HCT116 (cell line): ENCODE measurements at regions of chr18 and their contacts with region 1.

Region 1: DNA sequence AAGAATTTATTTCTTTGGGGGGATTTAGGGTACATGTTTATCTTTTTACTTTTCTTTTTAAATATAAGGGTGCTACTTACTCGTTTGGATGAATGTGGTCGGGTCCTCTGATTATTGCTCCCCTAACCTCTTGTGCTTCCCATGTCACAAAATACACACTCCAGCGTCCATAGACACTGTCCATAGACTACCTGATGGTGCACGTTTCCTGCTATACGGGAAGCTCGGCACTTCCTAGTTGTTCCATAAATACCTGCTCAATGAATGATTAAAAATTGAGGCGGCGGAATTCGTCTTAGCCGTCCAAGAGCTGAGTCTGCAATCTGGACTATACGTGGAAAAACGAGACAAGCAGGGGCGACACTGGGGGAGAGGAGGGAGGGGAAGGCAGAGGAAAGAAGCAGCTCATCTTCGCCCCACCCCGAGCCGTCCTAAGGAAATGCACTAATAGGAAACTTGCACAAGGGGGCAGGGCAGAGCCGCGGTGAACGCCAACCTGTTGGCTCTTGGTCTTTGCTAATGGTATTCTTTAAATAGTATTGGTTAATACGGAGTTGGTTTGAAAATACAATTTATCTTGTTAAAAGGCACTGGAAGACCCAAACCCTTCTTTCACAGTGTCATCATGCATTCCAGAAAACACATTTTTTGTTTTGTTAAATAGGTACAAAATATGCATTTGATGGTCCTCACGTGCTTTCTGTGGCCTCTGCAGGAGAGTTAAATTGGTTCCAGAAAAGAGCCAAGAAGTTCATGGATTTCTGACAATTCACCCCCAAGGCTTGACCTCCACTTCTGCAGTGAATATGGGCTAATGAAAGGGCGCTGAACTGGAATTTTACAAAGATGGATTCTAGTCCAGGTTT is 73.0 kb upstream of the KCTD1 start:
- DNase-seq: peak; percentile 23
- ATAC-seq: peak; percentile 95
- H3K4me3 ChIP-seq: peak overlapping the region; percentile 41 to 58
- H3K27ac ChIP-seq: no peak overlapping the region
- H3K4me1 ChIP-seq: peaks cover 7 to 27% of the 10 kb centered on the region in 2 experiments; a peak in 3 of 4 replicates
- H3K27me3 ChIP-seq: no peaks in the 10 kb centered on the region
- CTCF ChIP-seq: peak; percentile 56 to 80 (median 75)
- POLR2A ChIP-seq: no peak
- RAD21 ChIP-seq: peak; percentile 77

Region 2: GRCh38 chr18:26405190-26405801 is 216.1 kb before region 1 on chr18:
- CTCF ChIA-PET with region 1: interaction called, 15 read pairs
- POLR2A ChIA-PET with region 1: no interaction called
- RAD21 ChIA-PET with region 1: interaction called in 1 of 2 experiments, 3 read pairs
- intact Hi-C with region 1: no loop called
- DNase-seq: peak; percentile 36
- ATAC-seq: peak; percentile 96
- H3K4me3 ChIP-seq: no peak overlapping the region
- H3K27ac ChIP-seq: no peak overlapping the region
- H3K4me1 ChIP-seq: no peaks in the 10 kb centered on the region; a peak in 1 of 4 replicates
- H3K27me3 ChIP-seq: no peaks in the 10 kb centered on the region
- CTCF ChIP-seq: peak; percentile 56 to 75 (median 64); a peak in 5 of 6 replicates
- POLR2A ChIP-seq: no peak
- RAD21 ChIP-seq: peak; percentile 90

Region 3: GRCh38 chr18:26648509-26649192 is 27.3 kb after region 1 on chr18:
- CTCF ChIA-PET with region 1: interaction called, 11 read pairs
- POLR2A ChIA-PET with region 1: no interaction called
- RAD21 ChIA-PET with region 1: no interaction called
- intact Hi-C with region 1: no loop called
- DNase-seq: no peak
- ATAC-seq: no peak
- H3K4me3 ChIP-seq: no peak overlapping the region
- H3K27ac ChIP-seq: no peak overlapping the region
- H3K4me1 ChIP-seq: peaks cover 0 to 3% of the 10 kb centered on the region in 2 experiments; a peak in 1 of 4 replicates
- H3K27me3 ChIP-seq: peaks cover 10% of the 10 kb centered on the region
- CTCF ChIP-seq: no peak
- POLR2A ChIP-seq: no peak
- RAD21 ChIP-seq: no peak

Region 4: DNA sequence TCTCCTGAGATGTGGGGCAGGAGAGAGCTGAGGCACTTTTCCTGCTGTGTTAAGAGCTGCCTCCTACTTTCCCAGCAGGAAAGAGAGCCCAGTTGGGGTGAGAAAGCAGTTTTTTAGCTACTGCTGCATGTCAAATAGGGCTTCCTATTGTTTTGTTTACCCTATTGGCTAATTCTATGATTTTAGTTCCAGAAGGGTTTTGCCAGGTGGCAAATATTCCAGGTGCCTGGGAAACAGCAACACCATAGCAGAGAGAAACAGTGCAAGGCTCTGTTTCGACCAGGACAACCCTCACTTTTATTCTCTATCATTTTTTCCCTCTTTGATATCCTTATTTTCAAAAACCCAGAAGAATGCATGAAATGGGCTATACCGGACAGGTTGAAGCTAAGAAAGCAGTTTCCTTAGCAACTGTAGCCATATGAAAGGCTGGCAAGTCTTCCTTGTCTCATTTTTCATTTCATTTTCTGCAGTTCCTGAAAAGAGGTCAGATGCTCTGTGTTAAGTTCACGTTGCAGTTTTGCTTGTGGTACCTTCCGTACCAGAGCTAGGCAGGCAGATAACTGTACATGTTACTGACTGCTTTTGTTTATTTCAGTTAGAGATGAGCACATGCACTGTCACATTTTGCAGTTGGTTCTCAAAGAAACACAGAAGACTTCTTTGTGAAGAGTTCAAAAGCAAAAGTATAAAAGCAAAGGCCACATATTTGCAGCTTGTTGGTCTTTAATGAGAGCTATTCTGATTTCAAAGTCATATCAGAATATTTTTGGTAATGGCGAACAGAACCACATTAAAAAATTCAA is 159.3 kb after region 1 on chr18:
- CTCF ChIA-PET with region 1: no interaction called
- POLR2A ChIA-PET with region 1: no interaction called
- RAD21 ChIA-PET with region 1: no interaction called
- intact Hi-C with region 1: loop called (anchors 10 kb)
- DNase-seq: no peak
- ATAC-seq: no peak
- H3K4me3 ChIP-seq: no peak overlapping the region
- H3K27ac ChIP-seq: no peak overlapping the region
- H3K4me1 ChIP-seq: no peaks in the 10 kb centered on the region
- H3K27me3 ChIP-seq: peaks cover 31% of the 10 kb centered on the region
- CTCF ChIP-seq: no peak
- POLR2A ChIP-seq: no peak
- RAD21 ChIP-seq: no peak

Region 5: GRCh38 chr18:26826656-26827235 is 205.4 kb after region 1 on chr18:
- CTCF ChIA-PET with region 1: no interaction called
- POLR2A ChIA-PET with region 1: no interaction called
- RAD21 ChIA-PET with region 1: no interaction called
- intact Hi-C with region 1: no loop called
- DNase-seq: no peak
- ATAC-seq: no peak
- H3K4me3 ChIP-seq: no peak overlapping the region
- H3K27ac ChIP-seq: no peak overlapping the region
- H3K4me1 ChIP-seq: no peaks in the 10 kb centered on the region
- H3K27me3 ChIP-seq: peaks cover 17% of the 10 kb centered on the region
- CTCF ChIP-seq: no peak
- POLR2A ChIP-seq: no peak
- RAD21 ChIP-seq: no peak

Region 6: GRCh38 chr18:26893996-26894395 is 272.6 kb after region 1 on chr18:
- CTCF ChIA-PET with region 1: no interaction called
- POLR2A ChIA-PET with region 1: no interaction called
- RAD21 ChIA-PET with region 1: no interaction called
- intact Hi-C with region 1: no loop called
- DNase-seq: no peak
- ATAC-seq: no peak
- H3K4me3 ChIP-seq: no peak overlapping the region
- H3K27ac ChIP-seq: no peak overlapping the region
- H3K4me1 ChIP-seq: no peaks in the 10 kb centered on the region
- H3K27me3 ChIP-seq: 0 out of 2 replicates have a peak, but pooled peaks cover 4% of the 10 kb centered on the region
- CTCF ChIP-seq: no peak
- POLR2A ChIP-seq: no peak
- RAD21 ChIP-seq: no peak

Region 7: GRCh38 chr18:26963292-26963691 is 341.9 kb after region 1 on chr18:
- CTCF ChIA-PET with region 1: interaction called, 4 read pairs
- POLR2A ChIA-PET with region 1: no interaction called
- RAD21 ChIA-PET with region 1: no interaction called
- intact Hi-C with region 1: loop called (anchors 10 kb)
- DNase-seq: no peak
- ATAC-seq: no peak
- H3K4me3 ChIP-seq: no peak overlapping the region
- H3K27ac ChIP-seq: no peak overlapping the region
- H3K4me1 ChIP-seq: no peaks in the 10 kb centered on the region
- H3K27me3 ChIP-seq: no peaks in the 10 kb centered on the region
- CTCF ChIP-seq: 0 out of 6 replicates have a peak, but pooled peaks of 1 of the 3 experiments have one; percentile 23
- POLR2A ChIP-seq: no peak
- RAD21 ChIP-seq: peak; percentile 40

Region 8: DNA sequence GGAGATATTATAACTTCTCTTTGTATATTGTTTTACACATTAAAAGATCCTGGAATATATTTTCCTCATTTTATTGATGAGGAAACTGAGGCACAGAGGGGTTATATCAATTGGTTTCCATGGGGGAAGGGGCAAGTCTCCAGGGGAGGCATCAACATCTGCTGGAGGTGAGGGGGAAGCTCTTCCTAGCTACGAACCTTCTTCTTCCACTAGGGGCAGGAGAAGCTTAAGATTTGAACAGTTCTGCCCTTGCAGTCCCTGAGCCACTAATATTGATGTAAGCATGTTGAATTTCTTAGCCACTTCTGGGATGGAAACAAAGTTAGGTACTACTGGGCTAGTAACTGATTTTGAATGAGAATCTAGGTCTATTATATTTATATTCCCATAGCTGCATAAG is 384.2 kb after region 1 on chr18:
- CTCF ChIA-PET with region 1: interaction called, 3 read pairs
- POLR2A ChIA-PET with region 1: no interaction called
- RAD21 ChIA-PET with region 1: interaction called in 1 of 2 experiments, 4 read pairs
- intact Hi-C with region 1: loop called (anchors 5 kb)
- DNase-seq: peak; percentile 10
- ATAC-seq: peak; percentile 82
- H3K4me3 ChIP-seq: no peak overlapping the region
- H3K27ac ChIP-seq: no peak overlapping the region
- H3K4me1 ChIP-seq: no peaks in the 10 kb centered on the region
- H3K27me3 ChIP-seq: peaks cover 7% of the 10 kb centered on the region; the same call in 1 of the 2 replicates
- CTCF ChIP-seq: peak in 2 of 3 experiments; percentile 55 to 57; a peak in 4 of 6 replicates
- POLR2A ChIP-seq: no peak
- RAD21 ChIP-seq: peak; percentile 33

Region 9: DNA sequence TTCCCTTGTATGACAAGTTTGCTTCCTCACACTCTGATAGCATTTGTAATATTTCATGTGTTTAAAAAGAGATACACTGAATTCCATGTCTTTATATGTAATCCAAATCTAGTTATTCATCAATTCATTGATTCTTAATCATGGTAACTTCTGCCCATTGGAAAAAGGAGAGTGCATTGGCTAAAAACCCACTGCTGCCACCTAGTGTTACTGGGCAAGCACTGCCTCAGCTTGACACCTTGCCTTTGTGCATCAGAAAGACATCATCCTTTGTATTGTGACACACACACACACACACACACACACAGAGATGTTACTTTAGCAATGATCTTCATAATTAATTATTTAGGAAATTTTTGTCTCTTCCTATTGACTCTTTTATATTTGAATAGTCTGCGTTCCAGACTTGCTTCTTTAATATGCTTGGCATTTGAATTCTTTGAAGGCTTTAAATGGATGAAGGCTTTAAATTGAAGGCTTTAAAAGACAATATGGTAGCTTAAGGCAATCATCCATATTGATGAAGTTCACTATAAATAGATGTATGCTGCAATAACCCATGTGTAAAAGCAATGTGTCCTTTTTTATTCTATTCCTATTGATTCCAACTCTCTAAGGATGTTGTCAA is 977.9 kb after region 1 on chr18:
- CTCF ChIA-PET with region 1: no interaction called
- POLR2A ChIA-PET with region 1: no interaction called
- RAD21 ChIA-PET with region 1: no interaction called
- intact Hi-C with region 1: loop called (anchors 10 kb)
- DNase-seq: peak; percentile 24
- ATAC-seq: peak; percentile 66
- H3K4me3 ChIP-seq: no peak overlapping the region
- H3K27ac ChIP-seq: no peak overlapping the region
- H3K4me1 ChIP-seq: no peaks in the 10 kb centered on the region
- H3K27me3 ChIP-seq: no peaks in the 10 kb centered on the region
- CTCF ChIP-seq: peak; percentile 35 to 88 (median 86); a peak in 5 of 6 replicates
- POLR2A ChIP-seq: no peak
- RAD21 ChIP-seq: peak; percentile 51